Right lobe of liver (tissue), 6 donors: ENCODE measurements at regions of chr10 and their contacts with region 1.

Region 1: GRCh38 chr10:29392376-29393021 is 103.6 kb downstream of the LYZL1 start:
- DNase-seq: no peak
- ATAC-seq: peak; percentile 77 to 82 (median 78)
- H3K4me3 ChIP-seq: no peak overlapping the region
- H3K27ac ChIP-seq: no peak overlapping the region
- H3K4me1 ChIP-seq: no peaks in the 10 kb centered on the region
- H3K27me3 ChIP-seq: no peaks in the 10 kb centered on the region
- CTCF ChIP-seq: peak; percentile 69 to 84 (median 80)
- POLR2A ChIP-seq: no peak

Region 2: DNA sequence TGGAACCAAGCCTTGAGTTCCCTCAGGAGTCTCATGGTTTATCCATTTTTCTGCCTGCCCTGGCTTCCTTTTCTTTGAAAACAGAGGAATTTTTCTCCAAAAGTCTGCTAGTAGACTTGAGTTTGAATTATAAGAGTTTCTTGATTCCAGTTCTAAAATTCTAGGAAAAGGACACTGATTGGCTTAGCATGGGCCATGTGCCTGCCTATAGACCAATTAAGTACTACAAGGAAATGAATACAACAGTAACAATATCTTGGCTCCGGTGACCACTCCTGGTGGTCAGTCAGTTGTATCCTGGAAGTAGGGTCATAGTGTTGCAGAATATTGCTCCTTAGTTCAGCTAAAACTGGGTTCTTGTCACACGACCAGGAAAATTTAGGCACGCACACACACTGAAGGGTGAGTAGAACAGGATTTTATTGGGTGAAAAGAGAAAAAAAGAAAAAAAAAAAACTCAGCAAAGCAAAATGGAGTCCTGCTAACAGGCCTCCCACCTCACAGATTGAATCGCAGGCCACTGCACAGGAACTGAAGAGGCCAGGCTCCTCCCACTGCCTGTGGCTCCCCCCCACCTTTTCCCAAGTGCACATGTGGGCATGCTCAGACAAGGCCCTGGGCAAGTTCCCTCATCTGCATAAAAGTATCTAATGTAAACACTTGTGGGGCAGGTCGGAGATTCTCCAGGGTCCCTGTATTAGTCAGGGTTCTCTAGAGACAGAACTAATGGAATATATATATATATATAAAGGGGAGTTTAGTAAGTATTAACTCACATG is 51.4 kb after region 1 on chr10:
- intact Hi-C with region 1: loop called in 1 of 2 experiments (anchors 10 kb)
- DNase-seq: no peak
- ATAC-seq: no peak
- H3K4me3 ChIP-seq: no peak overlapping the region
- H3K27ac ChIP-seq: no peak overlapping the region
- H3K4me1 ChIP-seq: no peaks in the 10 kb centered on the region
- H3K27me3 ChIP-seq: no peaks in the 10 kb centered on the region
- CTCF ChIP-seq: no peak
- POLR2A ChIP-seq: no peak